CD4-positive, alpha-beta memory T cell (primary cell): ENCODE measurements at regions of chr3 and their contacts with region 1.

Region 1: DNA sequence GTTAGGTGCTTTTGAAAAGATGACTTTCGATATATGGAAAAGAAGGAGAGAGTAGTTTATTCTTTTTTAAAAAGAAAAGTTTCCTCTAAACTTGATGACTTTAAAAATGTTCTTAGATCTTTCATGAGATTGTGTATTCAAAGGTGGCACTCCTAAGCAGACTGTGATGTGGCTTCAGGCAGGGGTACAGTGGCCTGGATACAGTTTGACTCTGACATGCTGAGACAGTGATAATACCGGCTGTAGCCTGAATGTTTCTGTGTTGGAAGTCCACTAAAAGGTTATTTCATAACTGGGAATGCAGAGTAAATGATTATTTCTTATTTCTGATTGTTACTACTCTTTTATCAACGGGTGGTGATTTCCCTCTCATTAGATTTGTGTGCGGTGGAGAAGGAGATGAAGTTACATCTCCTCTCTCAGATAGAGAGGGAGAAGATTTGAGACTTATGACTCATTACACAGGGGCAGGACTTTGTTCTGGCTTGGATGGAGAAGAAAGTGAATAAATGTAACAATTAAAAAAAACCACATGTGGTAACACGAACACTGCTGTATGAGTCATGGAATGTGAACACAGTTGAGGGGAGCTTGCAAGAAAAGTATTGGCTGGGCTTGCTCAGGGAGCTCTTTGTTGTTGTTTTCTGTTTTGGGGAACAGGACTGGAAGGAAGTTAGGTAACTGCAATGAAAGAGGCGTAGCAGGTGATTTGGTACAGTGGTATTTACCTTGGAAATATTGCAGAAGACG is 21.6 kb downstream of the SPTSSB start:
- DNase-seq: peak; percentile 37 to 84 (median 63)
- H3K4me3 ChIP-seq: no peak overlapping the region
- H3K4me3 Mint-ChIP-seq: peak overlapping the region in 6 of 8 donors; percentile 7 to 79 (median 41)
- H3K27ac ChIP-seq: no peak overlapping the region
- H3K27ac Mint-ChIP-seq: peak overlapping the region; percentile 2 to 74 (median 51)
- H3K4me1 ChIP-seq: peaks cover 24% of the 10 kb centered on the region
- H3K4me1 Mint-ChIP-seq: peaks cover 19 to 34% (median 20%) of the 10 kb centered on the region in 4 donors
- H3K27me3 ChIP-seq: no peaks in the 10 kb centered on the region
- H3K27me3 Mint-ChIP-seq: peaks cover 0 to 2% of the 10 kb centered on the region in 2 donors

Region 2: GRCh38 chr3:161310649-161311423 is 38.9 kb before region 1 on chr3:
- CTCF ChIA-PET with region 1: interaction called, 4 read pairs
- POLR2A ChIA-PET with region 1: interaction called, 9 read pairs
- intact Hi-C with region 1: loop called (anchors 1 kb)
- DNase-seq: peak; percentile 75 to 79 (median 77)
- H3K4me3 ChIP-seq: no peak overlapping the region
- H3K4me3 Mint-ChIP-seq: peak overlapping the region; percentile 1 to 77 (median 45)
- H3K27ac ChIP-seq: no peak overlapping the region
- H3K27ac Mint-ChIP-seq: peak overlapping the region; percentile 68 to 88 (median 82)
- H3K4me1 ChIP-seq: peaks cover 55% of the 10 kb centered on the region
- H3K4me1 Mint-ChIP-seq: peaks cover 47 to 83% (median 58%) of the 10 kb centered on the region in 4 donors
- H3K27me3 ChIP-seq: no peaks in the 10 kb centered on the region
- H3K27me3 Mint-ChIP-seq: no peaks in the 10 kb centered on the region

Region 3: DNA sequence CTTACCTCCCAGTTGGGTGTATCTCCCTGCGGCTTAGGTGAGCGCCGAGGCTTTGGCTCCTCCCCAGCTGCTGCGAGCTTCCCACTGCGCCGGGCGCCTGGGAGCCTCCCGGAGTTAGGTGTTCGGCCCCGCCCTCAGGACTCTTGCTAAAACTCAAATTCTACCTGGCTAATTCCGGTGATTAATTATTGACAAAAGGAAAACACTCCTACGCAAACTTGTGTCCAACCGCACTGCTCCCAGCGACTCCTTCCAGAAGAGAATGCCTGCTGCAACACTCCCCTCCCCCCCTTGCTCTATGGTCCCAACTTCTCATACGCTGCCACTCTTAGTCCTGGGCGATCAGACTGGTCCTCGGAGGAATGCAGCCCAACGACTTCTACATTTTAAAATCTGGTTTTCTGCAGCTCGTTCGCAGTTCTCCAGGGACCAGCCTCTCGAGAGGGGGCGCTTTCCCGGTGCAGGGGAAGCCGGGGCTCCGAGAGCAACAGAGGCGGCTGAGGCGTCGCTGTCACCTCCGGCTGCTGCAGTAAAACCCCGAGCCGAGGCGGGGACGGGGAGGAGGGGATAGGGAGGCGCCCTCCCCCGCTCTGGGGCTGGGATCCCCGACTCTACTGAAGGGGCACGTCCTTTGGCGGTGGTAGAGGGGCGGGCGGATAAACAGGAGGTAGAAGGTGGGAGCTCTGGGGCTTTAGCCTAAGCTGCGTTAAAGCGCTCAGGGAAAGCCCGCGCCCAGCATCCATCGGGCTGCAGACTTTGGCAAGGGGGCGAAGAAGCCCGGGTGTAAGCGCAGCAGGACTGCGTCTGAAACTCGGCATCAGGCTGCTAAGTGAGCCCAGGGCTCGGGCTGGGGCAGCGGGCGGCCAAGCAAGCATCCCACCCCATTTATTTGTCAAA is 22.0 kb after region 1 on chr3 and contains the start of gene SPTSSB:
- CTCF ChIA-PET with region 1: interaction called, 5 read pairs
- POLR2A ChIA-PET with region 1: interaction called, 3 read pairs
- intact Hi-C with region 1: loop called (anchors 1 kb)
- DNase-seq: peak; percentile 41 to 57 (median 45)
- H3K4me3 ChIP-seq: peak within 1 kb of the TSS; percentile 46 to 69
- H3K4me3 Mint-ChIP-seq: peak within 1 kb of the TSS; percentile 83 to 95 (median 88)
- H3K27ac ChIP-seq: no peak within 1 kb of the TSS
- H3K27ac Mint-ChIP-seq: peak within 1 kb of the TSS in 4 of 7 donors; percentile 4 to 91 (median 72)
- H3K4me1 ChIP-seq: peaks cover 17% of the 10 kb centered on the region
- H3K4me1 Mint-ChIP-seq: peaks cover 4 to 25% (median 12%) of the 10 kb centered on the region in 4 donors
- H3K27me3 ChIP-seq: peaks cover 5% of the 10 kb centered on the region
- H3K27me3 Mint-ChIP-seq: peaks cover 4 to 17% of the 10 kb centered on the region in 2 donors
- total RNA-seq, gene SPTSSB: not detected